A673 (cell line): ENCODE measurements at regions of chr6 and their contacts with region 1.

Region 1: DNA sequence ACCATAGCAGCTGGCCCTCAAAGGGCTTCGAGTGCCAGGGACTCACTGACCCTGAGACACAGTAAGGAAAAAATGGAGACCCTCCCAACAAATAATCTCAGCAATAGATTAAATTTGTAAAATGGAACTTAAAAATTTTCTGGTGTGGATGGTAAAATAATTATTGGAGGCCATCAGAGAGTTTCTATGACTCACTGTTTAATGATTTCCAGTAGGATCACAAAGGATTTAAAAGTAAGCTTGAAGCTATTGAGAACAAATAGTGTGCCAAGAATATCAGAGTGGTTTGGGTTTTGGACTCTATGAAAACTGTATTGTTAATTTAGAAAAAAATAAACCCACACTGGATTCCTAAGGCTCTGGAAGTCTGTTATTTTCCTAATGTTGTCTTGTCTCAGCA is 115.2 kb upstream of the AKIRIN2 start:
- DNase-seq: no peak
- H3K4me3 ChIP-seq: no peak overlapping the region
- H3K27ac ChIP-seq: no peak overlapping the region
- H3K4me1 ChIP-seq: no peaks in the 10 kb centered on the region
- H3K27me3 ChIP-seq: peaks cover 5% of the 10 kb centered on the region
- CTCF ChIP-seq: no peak

Region 2: DNA sequence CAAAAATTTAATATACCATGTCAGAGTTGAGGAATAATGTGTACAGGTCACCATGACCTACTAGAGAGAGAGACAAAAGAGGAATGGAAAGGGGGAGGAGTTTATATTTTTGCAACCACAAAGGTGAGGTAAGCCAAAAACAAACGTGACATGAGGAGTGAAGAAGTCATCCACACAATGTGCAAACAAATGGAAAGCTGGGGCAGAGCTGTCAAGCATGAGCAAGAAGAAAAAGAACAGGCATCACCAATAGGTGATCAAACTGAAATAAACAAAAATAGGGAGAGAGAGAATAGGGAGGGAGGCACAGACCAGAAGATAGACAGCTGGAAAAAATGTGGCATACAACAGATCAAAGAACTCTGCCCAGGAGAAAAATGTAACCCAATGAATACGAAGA is 242.9 kb before region 1 on chr6:
- CTCF ChIA-PET with region 1: no interaction called
- POLR2A ChIA-PET with region 1: interaction called, 10 read pairs
- intact Hi-C with region 1: no loop called
- DNase-seq: no peak
- H3K4me3 ChIP-seq: no peak overlapping the region
- H3K27ac ChIP-seq: no peak overlapping the region
- H3K4me1 ChIP-seq: no peaks in the 10 kb centered on the region
- H3K27me3 ChIP-seq: no peaks in the 10 kb centered on the region
- CTCF ChIP-seq: no peak

Region 3: DNA sequence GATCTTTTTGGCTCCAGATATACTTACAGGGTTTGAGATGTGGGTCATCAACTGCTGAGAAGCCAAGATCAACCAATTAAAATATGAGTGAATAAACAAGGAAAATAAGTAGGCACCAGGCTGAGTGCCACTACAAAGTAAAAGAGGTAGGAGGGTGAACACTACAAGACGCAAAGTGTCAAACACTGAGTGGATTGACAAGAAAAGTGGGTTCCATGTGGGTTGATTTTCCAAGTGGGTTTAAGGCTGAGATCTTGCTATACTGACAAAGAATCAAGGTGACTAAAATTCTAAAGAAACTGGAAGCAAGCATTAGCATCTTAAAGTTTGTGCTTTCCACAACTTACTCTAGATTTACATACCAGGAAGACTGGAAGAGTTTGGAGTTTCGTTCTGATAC is 70.1 kb after region 1 on chr6:
- CTCF ChIA-PET with region 1: no interaction called
- POLR2A ChIA-PET with region 1: no interaction called
- intact Hi-C with region 1: no loop called
- DNase-seq: no peak
- H3K4me3 ChIP-seq: no peak overlapping the region
- H3K27ac ChIP-seq: no peak overlapping the region
- H3K4me1 ChIP-seq: peaks cover 6% of the 10 kb centered on the region
- H3K27me3 ChIP-seq: no peaks in the 10 kb centered on the region
- CTCF ChIP-seq: no peak